Transverse colon (tissue), 4 donors: ENCODE measurements at regions of chr6 and their contacts with region 1.

Region 1: GRCh38 chr6:150624191-150624590 is 24.5 kb downstream of the PLEKHG1 start:
- DNase-seq: no peak
- H3K4me3 ChIP-seq: no peak overlapping the region
- H3K27ac ChIP-seq: no peak overlapping the region
- H3K4me1 ChIP-seq: peaks cover 7 to 49% (median 41%) of the 10 kb centered on the region in 4 donors
- H3K27me3 ChIP-seq: no peaks in the 10 kb centered on the region
- CTCF ChIP-seq: no peak
- EP300 ChIP-seq: no peak
- POLR2A ChIP-seq: no peak

Region 2: GRCh38 chr6:150579611-150580010 is 44.6 kb before region 1 on chr6:
- in situ Hi-C with region 1: no loop called
- intact Hi-C with region 1: no loop called
- DNase-seq: no peak
- H3K4me3 ChIP-seq: no peak overlapping the region
- H3K27ac ChIP-seq: no peak overlapping the region
- H3K4me1 ChIP-seq: peaks cover 0 to 5% (median 3%) of the 10 kb centered on the region in 4 donors
- H3K27me3 ChIP-seq: no peaks in the 10 kb centered on the region
- CTCF ChIP-seq: no peak
- EP300 ChIP-seq: no peak
- POLR2A ChIP-seq: no peak

Region 3: GRCh38 chr6:150667977-150668716 is 44.0 kb after region 1 on chr6:
- in situ Hi-C with region 1: no loop called
- intact Hi-C with region 1: loop called (anchors 2 kb)
- DNase-seq: peak; percentile 92
- H3K4me3 ChIP-seq: no peak overlapping the region
- H3K27ac ChIP-seq: peak overlapping the region; percentile 64 to 73 (median 69)
- H3K4me1 ChIP-seq: peaks cover 16 to 41% (median 27%) of the 10 kb centered on the region in 4 donors
- H3K27me3 ChIP-seq: no peaks in the 10 kb centered on the region
- CTCF ChIP-seq: peak in 3 of 5 experiments; percentile 7 to 25 (median 18)
- EP300 ChIP-seq: no peak
- POLR2A ChIP-seq: no peak